Esophagus muscularis mucosa (tissue), 4 donors: ENCODE measurements at regions of chr6 and their contacts with region 1.

Region 1: GRCh38 chr6:97497713-97498331 is 214.8 kb upstream of the MMS22L start:
- DNase-seq: no peak
- H3K4me3 ChIP-seq: no peak overlapping the region
- H3K27ac ChIP-seq: no peak overlapping the region
- H3K4me1 ChIP-seq: no peaks in the 10 kb centered on the region
- H3K27me3 ChIP-seq: no peaks in the 10 kb centered on the region
- CTCF ChIP-seq: peak; percentile 62 to 77 (median 73)
- EP300 ChIP-seq: no peak
- POLR2A ChIP-seq: no peak

Region 2: GRCh38 chr6:99119109-99120031 is 1621.5 kb after region 1 on chr6:
- intact Hi-C with region 1: loop called (anchors 5 kb)
- DNase-seq: no peak
- H3K4me3 ChIP-seq: no peak overlapping the region
- H3K27ac ChIP-seq: no peak overlapping the region
- H3K4me1 ChIP-seq: no peaks in the 10 kb centered on the region
- H3K27me3 ChIP-seq: peaks cover 0 to 15% (median 3%) of the 10 kb centered on the region in 4 donors
- CTCF ChIP-seq: peak; percentile 32 to 52 (median 52)
- EP300 ChIP-seq: no peak
- POLR2A ChIP-seq: no peak